Posterior cingulate gyrus (tissue), 11 donors: ENCODE measurements at regions of chr4 and their contacts with region 1.

Region 1: GRCh38 chr4:153750197-153750817 is 9.5 kb downstream of the RNF175 start:
- DNase-seq: peak in 6 of 10 donors; percentile 31 to 90 (median 56)

Region 2: GRCh38 chr4:153249199-153250041 is 500.9 kb before region 1 on chr4:
- intact Hi-C with region 1: no loop called
- DNase-seq: peak; percentile 38 to 95 (median 64)

Region 3: GRCh38 chr4:153594210-153594609 is 156.1 kb before region 1 on chr4:
- intact Hi-C with region 1: no loop called
- DNase-seq: no peak

Region 4: GRCh38 chr4:153643406-153644383 is 106.6 kb before region 1 on chr4:
- intact Hi-C with region 1: loop called (anchors 5 kb)
- DNase-seq: no peak

Region 5: GRCh38 chr4:154526151-154526550 is 775.8 kb after region 1 on chr4:
- intact Hi-C with region 1: no loop called
- DNase-seq: no peak